Caki2 (cell line): ENCODE measurements at regions of chr3 and their contacts with region 1.

Region 1: GRCh38 chr3:98980915-98981596 is 79.6 kb upstream of the DCBLD2 start:
- DNase-seq: peak; percentile 72

Region 2: DNA sequence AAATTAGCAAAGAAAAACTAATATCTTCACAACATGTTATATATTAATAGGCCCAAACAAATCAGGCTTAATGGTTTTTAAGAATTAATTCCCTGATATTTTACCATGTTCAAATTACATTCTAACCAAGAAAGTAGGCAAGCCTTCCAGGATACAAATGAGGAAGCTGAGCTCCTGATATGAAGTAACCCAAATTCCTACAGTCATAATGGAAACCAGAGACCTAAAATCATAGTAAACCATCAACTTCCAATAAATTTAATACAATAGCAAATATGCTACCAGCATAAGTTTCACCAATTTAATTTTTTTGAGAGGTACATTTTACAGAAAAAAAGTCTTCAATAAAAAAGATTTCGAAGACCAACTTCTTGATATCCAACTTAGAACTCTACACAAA is 83.4 kb before region 1 on chr3:
- in situ Hi-C with region 1: loop called (anchors 5 kb)
- DNase-seq: no peak